Activated naive CD4-positive, alpha-beta T cell treated with anti-CD3 and anti-CD28 coated beads for 36 hours (primary cell): ENCODE measurements at regions of chr4 and their contacts with region 1.

Region 1: GRCh38 chr4:113547487-113548042 is 214.0 kb downstream of the CAMK2D start:
- DNase-seq: peak; percentile 97
- H3K4me3 Mint-ChIP-seq: no peak overlapping the region
- H3K27ac Mint-ChIP-seq: peak overlapping the region; percentile 8
- H3K4me1 Mint-ChIP-seq: peaks cover 17% of the 10 kb centered on the region
- H3K27me3 Mint-ChIP-seq: no peaks in the 10 kb centered on the region

Region 2: GRCh38 chr4:113394730-113395530 is 152.6 kb before region 1 on chr4:
- CTCF ChIA-PET with region 1: interaction called, 10 read pairs
- intact Hi-C with region 1: loop called (anchors 2 kb)
- DNase-seq: peak; percentile 70
- H3K4me3 Mint-ChIP-seq: no peak overlapping the region
- H3K27ac Mint-ChIP-seq: no peak overlapping the region
- H3K4me1 Mint-ChIP-seq: no peaks in the 10 kb centered on the region
- H3K27me3 Mint-ChIP-seq: peaks cover 1% of the 10 kb centered on the region

Region 3: GRCh38 chr4:113566015-113566795 is 18.6 kb after region 1 on chr4:
- CTCF ChIA-PET with region 1: interaction called, 9 read pairs
- intact Hi-C with region 1: loop called (anchors 1 kb)
- DNase-seq: no peak
- H3K4me3 Mint-ChIP-seq: no peak overlapping the region
- H3K27ac Mint-ChIP-seq: peak overlapping the region; percentile 15
- H3K4me1 Mint-ChIP-seq: peaks cover 40% of the 10 kb centered on the region
- H3K27me3 Mint-ChIP-seq: no peaks in the 10 kb centered on the region

Region 4: DNA sequence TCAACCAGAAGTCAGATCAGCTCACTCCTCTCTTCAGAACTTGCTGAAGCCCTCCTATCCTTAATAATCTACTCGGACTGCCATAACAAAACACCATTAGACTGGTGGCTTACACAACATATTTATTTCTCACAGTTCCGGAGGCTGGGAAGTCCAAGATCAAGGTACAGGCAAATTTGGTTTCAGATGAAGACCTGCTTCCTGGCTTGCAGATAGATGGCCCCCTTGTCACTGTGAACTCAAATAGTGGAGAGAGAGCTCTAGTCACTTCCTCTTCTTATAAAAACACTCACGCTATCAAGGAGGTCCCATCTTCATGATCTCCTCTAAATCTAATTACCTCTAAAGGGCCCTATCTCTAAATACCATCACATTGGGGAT is 88.9 kb after region 1 on chr4:
- CTCF ChIA-PET with region 1: interaction called, 4 read pairs
- intact Hi-C with region 1: loop called (anchors 1 kb)
- DNase-seq: peak; percentile 26
- H3K4me3 Mint-ChIP-seq: peak overlapping the region; percentile 23
- H3K27ac Mint-ChIP-seq: peak overlapping the region; percentile 83
- H3K4me1 Mint-ChIP-seq: peaks cover 46% of the 10 kb centered on the region
- H3K27me3 Mint-ChIP-seq: no peaks in the 10 kb centered on the region

Region 5: GRCh38 chr4:113756005-113756410 is 208.4 kb after region 1 on chr4:
- CTCF ChIA-PET with region 1: interaction called, 4 read pairs
- intact Hi-C with region 1: loop called (anchors 1 kb)
- DNase-seq: no peak
- H3K4me3 Mint-ChIP-seq: no peak overlapping the region
- H3K27ac Mint-ChIP-seq: no peak overlapping the region
- H3K4me1 Mint-ChIP-seq: peaks cover 47% of the 10 kb centered on the region
- H3K27me3 Mint-ChIP-seq: no peaks in the 10 kb centered on the region